ENCODE measurements at regions of chr16 and their contacts with region 1.

Region 1: GRCh38 chr16:74991593-74992403 is 6.9 kb upstream of the WDR59 start:
- DNase-seq: no peak
- ATAC-seq: no peak
- H3K4me3 ChIP-seq: no peak overlapping the region
- H3K27ac ChIP-seq: no peak overlapping the region
- H3K4me1 ChIP-seq: no peaks in the 10 kb centered on the region
- H3K27me3 ChIP-seq: no peaks in the 10 kb centered on the region
- CTCF ChIP-seq: no peak
- POLR2A ChIP-seq: no peak

Region 2: DNA sequence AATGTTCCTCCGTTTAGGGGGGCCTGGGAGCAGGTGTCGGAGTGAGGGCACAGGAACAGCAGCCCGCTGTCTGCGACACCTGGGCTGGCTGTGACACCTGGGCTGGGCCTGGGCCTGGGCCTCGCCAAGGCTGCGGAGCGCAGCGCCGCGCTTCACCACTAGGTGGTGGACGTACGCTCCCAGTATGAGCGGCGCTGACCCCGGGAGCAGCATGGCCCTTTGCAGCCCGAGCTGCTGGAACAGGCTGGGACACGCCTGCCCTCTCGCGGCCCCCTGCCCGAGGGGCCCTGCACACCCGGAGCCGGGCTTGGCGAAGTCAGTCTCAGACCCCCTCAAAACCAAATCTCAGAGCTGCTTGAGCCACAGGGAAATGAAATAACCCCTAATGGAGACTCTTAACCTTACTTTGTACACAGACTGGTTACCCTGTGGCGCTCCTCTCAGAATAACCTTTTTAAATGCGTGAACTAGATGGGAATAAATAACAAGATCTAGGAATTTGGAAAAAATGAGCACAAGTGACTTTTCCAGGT is 178.6 kb before region 1 on chr16:
- in situ Hi-C with region 1: no loop called
- intact Hi-C with region 1: no loop called
- DNase-seq: peak; percentile 28 to 46
- ATAC-seq: peak; percentile 66 to 76
- H3K4me3 ChIP-seq: no peak overlapping the region
- H3K27ac ChIP-seq: no peak overlapping the region
- H3K4me1 ChIP-seq: no peaks in the 10 kb centered on the region
- H3K27me3 ChIP-seq: no peaks in the 10 kb centered on the region
- CTCF ChIP-seq: peak; percentile 61 to 86 (median 77)
- POLR2A ChIP-seq: no peak

Region 3: DNA sequence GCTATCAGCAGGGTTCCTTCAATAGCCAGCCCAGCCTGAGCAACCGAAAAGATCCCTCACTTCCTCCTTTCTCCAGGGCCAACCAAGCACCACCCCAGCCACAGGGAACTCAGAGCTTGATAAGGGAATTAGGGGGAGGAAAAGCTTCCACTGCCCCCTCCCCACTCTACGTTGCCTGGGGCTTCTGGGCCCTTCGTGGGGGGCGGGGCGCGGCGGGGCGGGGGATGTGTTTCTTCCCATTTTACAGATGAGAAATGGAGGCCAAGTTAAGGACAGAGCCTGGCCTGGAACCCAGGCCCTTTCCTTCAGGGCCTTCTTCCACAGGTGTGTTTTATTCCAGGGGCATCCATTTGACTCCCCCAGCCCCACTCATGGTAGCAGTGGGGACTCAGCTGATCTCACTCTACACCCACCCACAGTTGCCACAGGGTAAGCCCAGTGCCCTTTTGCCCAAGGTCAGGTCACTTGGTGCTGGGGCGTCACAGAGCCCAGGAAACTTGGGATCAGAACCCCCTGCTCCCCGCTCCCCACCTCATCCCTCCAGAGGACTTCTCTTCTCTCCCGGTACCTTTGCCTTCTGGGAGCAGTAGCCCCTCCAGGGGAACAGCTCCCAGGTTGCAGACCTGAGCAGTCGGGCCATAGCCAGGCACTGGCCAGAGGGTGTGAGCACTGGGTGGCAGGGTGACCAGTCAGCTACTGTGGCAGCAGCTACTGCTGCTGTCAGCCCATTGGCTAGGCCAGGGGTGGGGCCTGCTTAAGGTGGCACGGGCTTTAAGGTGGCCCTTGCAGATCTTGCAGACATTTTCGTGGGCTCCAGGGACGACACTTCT is 124.5 kb after region 1 on chr16 and contains the start of gene LDHD:
- in situ Hi-C with region 1: loop called in 1 of 4 experiments (anchors 5 kb)
- intact Hi-C with region 1: no loop called
- DNase-seq: peak; percentile 89 to 95
- ATAC-seq: peak; percentile 94 to 96
- H3K4me3 ChIP-seq: peak within 1 kb of the TSS; percentile 69 to 77 (median 75)
- H3K27ac ChIP-seq: peak within 1 kb of the TSS; percentile 95 to 99 (median 96)
- H3K4me1 ChIP-seq: peaks cover 29 to 38% of the 10 kb centered on the region in 2 donors
- H3K27me3 ChIP-seq: no peaks in the 10 kb centered on the region
- CTCF ChIP-seq: no peak
- POLR2A ChIP-seq: peak; percentile 87 to 92
- total RNA-seq, gene LDHD: 27.8 to 54.5 (median 44.2) TPM